ENCODE measurements at regions of chr2 and their contacts with region 1.

Region 1: DNA sequence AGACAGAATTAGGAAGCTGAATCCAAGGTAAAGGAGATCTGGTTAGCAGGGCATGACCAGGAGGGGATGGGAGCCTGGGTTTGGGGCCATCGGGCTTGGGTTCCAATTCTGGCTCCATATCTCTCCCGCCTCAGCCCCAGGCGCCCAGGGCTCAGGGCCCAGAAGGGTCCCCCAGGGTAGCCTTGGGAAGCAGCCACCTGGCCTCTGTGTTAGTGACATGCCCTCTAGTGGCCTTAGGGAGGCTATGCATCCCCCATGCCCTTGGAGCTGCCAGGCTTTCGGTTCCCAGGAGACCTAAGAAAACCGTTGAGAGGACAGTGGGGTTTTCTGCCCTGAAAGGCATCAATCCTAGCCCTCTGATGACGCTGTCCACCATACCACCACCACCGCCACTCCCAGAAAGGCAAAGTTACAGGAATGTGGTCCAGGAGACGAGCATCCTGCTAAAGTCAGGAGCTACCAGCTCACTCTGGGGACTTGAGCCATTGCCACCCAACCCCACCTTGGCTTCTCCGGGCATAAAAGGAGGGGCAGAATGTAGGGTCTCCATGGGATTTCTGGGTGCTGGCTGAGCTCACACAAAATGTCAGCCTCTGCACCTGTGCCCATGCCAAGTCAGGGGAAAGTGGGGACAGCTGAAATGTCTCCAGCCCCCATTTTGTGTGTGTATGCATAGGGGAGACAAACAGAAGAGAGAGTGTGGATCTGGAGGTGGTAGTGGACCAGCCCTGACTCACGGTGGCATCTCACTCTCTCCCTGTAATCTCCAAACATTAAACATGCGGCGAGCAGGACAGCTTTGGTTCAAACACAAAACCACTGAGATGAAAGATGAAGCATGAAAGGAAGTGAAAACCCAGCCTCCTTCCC is 56.5 kb downstream of the EMX1 start:
- DNase-seq: peak in 1 of 2 experiments; percentile 85
- H3K4me3 ChIP-seq: no peak overlapping the region
- H3K27ac ChIP-seq: no peak overlapping the region
- H3K4me1 ChIP-seq: peaks cover 5 to 21% (median 17%) of the 10 kb centered on the region in 4 experiments
- H3K27me3 ChIP-seq: no peaks in the 10 kb centered on the region; a peak in 1 of 7 replicates
- CTCF ChIP-seq: peak; percentile 93 to 95 (median 94)
- EP300 ChIP-seq: no peak
- POLR2A ChIP-seq: no peak
- RAD21 ChIP-seq: peak; percentile 86 to 89

Region 2: GRCh38 chr2:72689579-72690195 is 284.1 kb before region 1 on chr2:
- CTCF ChIA-PET with region 1: no interaction called
- POLR2A ChIA-PET with region 1: no interaction called
- DNase-seq: no peak
- H3K4me3 ChIP-seq: no peak overlapping the region
- H3K27ac ChIP-seq: no peak overlapping the region
- H3K4me1 ChIP-seq: peaks cover 0 to 2% (median under 1%) of the 10 kb centered on the region in 4 experiments; a peak in 3 of 7 replicates
- H3K27me3 ChIP-seq: no peaks in the 10 kb centered on the region
- CTCF ChIP-seq: no peak
- EP300 ChIP-seq: no peak
- POLR2A ChIP-seq: no peak
- RAD21 ChIP-seq: no peak

Region 3: GRCh38 chr2:72934683-72935610 is 38.9 kb before region 1 on chr2:
- CTCF ChIA-PET with region 1: interaction called, 16 read pairs
- POLR2A ChIA-PET with region 1: interaction called, 3 read pairs
- DNase-seq: no peak
- H3K4me3 ChIP-seq: no peak overlapping the region
- H3K27ac ChIP-seq: no peak overlapping the region
- H3K4me1 ChIP-seq: peaks cover 0 to 16% (median 9%) of the 10 kb centered on the region in 4 experiments; a peak in 5 of 7 replicates
- H3K27me3 ChIP-seq: peaks cover 0 to 19% (median 10%) of the 10 kb centered on the region in 4 experiments; a peak in 3 of 7 replicates
- CTCF ChIP-seq: peak in 2 of 3 experiments; percentile 77 to 79; a peak in 3 of 4 replicates
- EP300 ChIP-seq: no peak
- POLR2A ChIP-seq: no peak
- RAD21 ChIP-seq: peak; percentile 79 to 80

Region 4: GRCh38 chr2:72953976-72954375 is 19.8 kb before region 1 on chr2:
- CTCF ChIA-PET with region 1: interaction called, 82 read pairs
- POLR2A ChIA-PET with region 1: interaction called, 3 read pairs
- DNase-seq: no peak
- H3K4me3 ChIP-seq: no peak overlapping the region
- H3K27ac ChIP-seq: no peak overlapping the region
- H3K4me1 ChIP-seq: peaks cover 3 to 24% (median 17%) of the 10 kb centered on the region in 4 experiments
- H3K27me3 ChIP-seq: no peaks in the 10 kb centered on the region; a peak in 1 of 7 replicates
- CTCF ChIP-seq: no peak
- EP300 ChIP-seq: no peak
- POLR2A ChIP-seq: no peak
- RAD21 ChIP-seq: no peak

Region 5: GRCh38 chr2:72993147-72993932 is 19.5 kb after region 1 on chr2:
- CTCF ChIA-PET with region 1: interaction called, 60 read pairs
- POLR2A ChIA-PET with region 1: no interaction called
- DNase-seq: peak in 1 of 2 experiments; percentile 82
- H3K4me3 ChIP-seq: no peak overlapping the region
- H3K27ac ChIP-seq: no peak overlapping the region
- H3K4me1 ChIP-seq: peaks cover 0 to 2% (median 0%) of the 10 kb centered on the region in 4 experiments; a peak in 3 of 7 replicates
- H3K27me3 ChIP-seq: no peaks in the 10 kb centered on the region; a peak in 3 of 7 replicates
- CTCF ChIP-seq: peak; percentile 62 to 81 (median 71)
- EP300 ChIP-seq: no peak
- POLR2A ChIP-seq: no peak
- RAD21 ChIP-seq: peak; percentile 69 to 74

Measured in H1 (cell line).